Breast epithelium (tissue), 4 donors: ENCODE measurements at regions of chr22 and their contacts with region 1.

Region 1: DNA sequence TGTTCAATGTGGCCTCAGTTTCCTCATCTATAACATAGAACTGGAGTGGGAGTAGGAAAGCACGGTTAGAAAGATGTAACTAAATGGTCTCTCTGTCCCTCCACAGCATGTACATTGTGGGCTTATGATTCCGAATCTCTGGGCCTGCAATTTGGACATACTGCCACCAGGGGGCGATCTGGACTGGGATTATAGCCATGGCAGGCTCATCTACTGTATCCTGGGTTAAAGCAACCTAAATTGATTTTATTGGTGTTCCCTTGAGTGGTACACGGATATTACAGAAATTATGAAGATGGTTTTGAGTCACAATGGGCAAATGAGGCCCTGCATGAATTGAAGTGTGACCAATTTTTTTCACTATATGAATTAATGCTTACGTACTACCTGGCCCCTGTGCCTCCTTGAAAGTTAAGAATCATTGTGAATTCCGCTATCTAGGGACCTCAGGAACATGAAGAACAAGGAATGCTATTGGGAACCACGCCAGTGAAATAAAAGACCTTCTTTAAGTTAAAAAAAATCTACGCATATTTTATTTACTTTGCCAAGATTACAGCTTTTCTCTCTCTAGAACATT is 32.9 kb downstream of the TST start:
- DNase-seq: no peak
- H3K4me3 ChIP-seq: no peak overlapping the region
- H3K27ac ChIP-seq: no peak overlapping the region
- H3K4me1 ChIP-seq: no peaks in the 10 kb centered on the region
- H3K27me3 ChIP-seq: peaks cover 0 to 19% of the 10 kb centered on the region in 2 donors
- CTCF ChIP-seq: peak in 1 of 3 donors; percentile 17
- POLR2A ChIP-seq: no peak

Region 2: GRCh38 chr22:36684841-36685240 is 301.5 kb before region 1 on chr22:
- intact Hi-C with region 1: no loop called
- DNase-seq: no peak
- H3K4me3 ChIP-seq: no peak overlapping the region
- H3K27ac ChIP-seq: no peak overlapping the region
- H3K4me1 ChIP-seq: no peaks in the 10 kb centered on the region
- H3K27me3 ChIP-seq: peaks cover 0 to 36% of the 10 kb centered on the region in 2 donors
- CTCF ChIP-seq: no peak
- POLR2A ChIP-seq: no peak

Region 3: GRCh38 chr22:36790648-36791047 is 195.7 kb before region 1 on chr22:
- intact Hi-C with region 1: loop called (anchors 10 kb)
- DNase-seq: no peak
- H3K4me3 ChIP-seq: no peak overlapping the region
- H3K27ac ChIP-seq: no peak overlapping the region
- H3K4me1 ChIP-seq: no peaks in the 10 kb centered on the region
- H3K27me3 ChIP-seq: peaks cover 0 to 7% of the 10 kb centered on the region in 2 donors
- CTCF ChIP-seq: no peak
- POLR2A ChIP-seq: no peak